PC-3 (cell line): ENCODE measurements at regions of chr5 and their contacts with region 1.

Region 1: DNA sequence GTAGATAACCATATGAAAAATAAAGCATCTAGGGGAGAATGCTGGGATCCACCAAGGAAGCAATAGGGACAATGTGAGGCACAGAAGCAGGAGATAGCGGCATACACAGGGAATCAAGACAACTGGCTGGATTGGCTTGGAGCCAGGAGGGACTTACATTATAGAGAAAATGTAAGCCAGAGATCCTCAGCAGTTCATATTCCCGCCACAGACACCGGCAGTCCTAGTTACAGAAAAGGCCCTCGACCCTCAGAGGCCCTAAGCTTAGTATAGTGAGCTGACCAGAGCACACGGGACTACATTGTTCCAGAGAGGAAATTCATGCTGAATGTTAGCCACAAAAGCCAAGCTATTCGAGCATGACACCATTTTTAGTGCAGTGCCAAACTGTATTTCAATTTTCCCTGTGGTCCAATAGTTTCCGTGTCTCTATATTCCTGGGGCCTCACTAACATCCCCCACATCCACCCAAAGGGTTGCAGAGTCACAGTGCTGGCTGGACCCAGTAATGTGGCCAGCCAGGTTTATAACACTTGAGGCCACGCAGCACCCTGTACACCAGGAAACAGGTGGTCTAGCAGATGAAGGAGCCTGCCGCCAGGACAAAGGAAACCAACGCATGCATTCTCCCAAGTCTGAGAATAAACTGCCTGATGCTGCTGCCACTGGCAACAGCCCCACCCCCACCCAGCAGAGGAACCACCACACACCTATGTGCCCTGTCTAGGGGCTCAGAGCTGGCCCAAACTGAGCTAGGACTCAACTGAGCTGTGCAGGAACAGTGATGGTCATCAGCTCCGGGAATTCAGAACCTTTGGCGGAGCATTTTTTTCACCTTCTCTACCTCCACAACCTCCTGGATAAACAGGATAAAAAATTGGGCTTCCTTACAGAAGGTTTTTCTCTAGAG is 693.2 kb upstream of the CHD1 start:
- DNase-seq: no peak
- ATAC-seq: no peak
- H3K4me3 ChIP-seq: no peak overlapping the region
- H3K27ac ChIP-seq: no peak overlapping the region
- H3K4me1 ChIP-seq: no peaks in the 10 kb centered on the region
- H3K27me3 ChIP-seq: no peaks in the 10 kb centered on the region
- CTCF ChIP-seq: no peak

Region 2: GRCh38 chr5:99646011-99646647 is 24.1 kb after region 1 on chr5:
- CTCF ChIA-PET with region 1: no interaction called
- POLR2A ChIA-PET with region 1: no interaction called
- intact Hi-C with region 1: loop called (anchors 2 kb)
- DNase-seq: peak; percentile 74
- ATAC-seq: peak; percentile 77
- H3K4me3 ChIP-seq: peak overlapping the region; percentile 6; the same call in 1 of the 2 replicates
- H3K27ac ChIP-seq: peak overlapping the region; percentile 66
- H3K4me1 ChIP-seq: peaks cover 25% of the 10 kb centered on the region
- H3K27me3 ChIP-seq: no peaks in the 10 kb centered on the region
- CTCF ChIP-seq: no peak; the same call in 1 of the 2 replicates